ENCODE measurements at regions of chrX and their contacts with region 1.

Region 1: GRCh38 chrX:12701628-12702027 is 89.6 kb upstream of the PRPS2 start:
- DNase-seq: no peak
- H3K4me3 ChIP-seq: no peak overlapping the region
- H3K27ac ChIP-seq: no peak overlapping the region
- H3K4me1 ChIP-seq: no peaks in the 10 kb centered on the region
- H3K27me3 ChIP-seq: no peaks in the 10 kb centered on the region
- CTCF ChIP-seq: peak; percentile 35 to 49 (median 37)
- EP300 ChIP-seq: no peak
- POLR2A ChIP-seq: no peak

Region 2: GRCh38 chrX:12080265-12080664 is 621.4 kb before region 1 on chrX:
- intact Hi-C with region 1: loop called (anchors 10 kb)
- DNase-seq: no peak
- H3K4me3 ChIP-seq: no peak overlapping the region
- H3K27ac ChIP-seq: no peak overlapping the region
- H3K4me1 ChIP-seq: no peaks in the 10 kb centered on the region
- H3K27me3 ChIP-seq: no peaks in the 10 kb centered on the region
- CTCF ChIP-seq: peak in 2 of 3 experiments; percentile 20 to 28
- EP300 ChIP-seq: no peak
- POLR2A ChIP-seq: no peak

Region 3: GRCh38 chrX:12567857-12568256 is 133.8 kb before region 1 on chrX:
- intact Hi-C with region 1: no loop called
- DNase-seq: no peak
- H3K4me3 ChIP-seq: no peak overlapping the region
- H3K27ac ChIP-seq: no peak overlapping the region
- H3K4me1 ChIP-seq: no peaks in the 10 kb centered on the region
- H3K27me3 ChIP-seq: no peaks in the 10 kb centered on the region
- CTCF ChIP-seq: peak in 2 of 3 experiments; percentile 33 to 47
- EP300 ChIP-seq: no peak
- POLR2A ChIP-seq: no peak

Region 4: DNA sequence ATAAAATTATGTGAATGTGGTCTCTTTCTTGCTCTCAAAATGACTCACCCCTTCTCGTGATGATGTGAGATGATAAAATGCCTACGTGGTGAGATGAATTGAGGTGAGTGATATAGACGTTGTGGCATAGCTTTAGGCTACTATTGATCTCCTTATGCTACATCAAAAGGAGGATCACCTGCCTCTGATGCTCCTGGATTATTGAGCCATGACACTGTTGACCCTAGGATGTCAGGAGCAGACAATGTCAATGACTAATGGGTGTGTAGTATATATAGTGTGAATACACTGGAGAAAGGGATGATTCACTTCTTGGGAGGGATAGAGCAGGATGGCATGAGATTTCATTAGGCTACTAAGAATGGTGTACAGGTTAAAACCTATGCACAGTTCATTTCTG is 121.1 kb before region 1 on chrX:
- intact Hi-C with region 1: no loop called
- DNase-seq: no peak
- H3K4me3 ChIP-seq: no peak overlapping the region
- H3K27ac ChIP-seq: no peak overlapping the region
- H3K4me1 ChIP-seq: no peaks in the 10 kb centered on the region
- H3K27me3 ChIP-seq: no peaks in the 10 kb centered on the region
- CTCF ChIP-seq: no peak
- EP300 ChIP-seq: no peak
- POLR2A ChIP-seq: no peak

Measured in esophagus muscularis mucosa (tissue), 4 donors.